ENCODE measurements at regions of chr4 and their contacts with region 1.

Region 1: GRCh38 chr4:81471588-81472288 is at the start of gene RASGEF1B:
- DNase-seq: peak; percentile 98
- ATAC-seq: peak; percentile 79
- H3K4me3 ChIP-seq: peak within 1 kb of the TSS; percentile 85 to 99 (median 98)
- H3K4me3 Mint-ChIP-seq: peak within 1 kb of the TSS; percentile 98
- H3K27ac ChIP-seq: peak within 1 kb of the TSS; percentile 98 to 100
- H3K27ac Mint-ChIP-seq: peak within 1 kb of the TSS; percentile 97
- H3K4me1 ChIP-seq: peaks cover 38 to 46% of the 10 kb centered on the region in 2 donors
- H3K4me1 Mint-ChIP-seq: peaks cover 49% of the 10 kb centered on the region
- H3K27me3 ChIP-seq: no peaks in the 10 kb centered on the region
- H3K27me3 Mint-ChIP-seq: no peaks in the 10 kb centered on the region
- CTCF ChIP-seq: no peak
- total RNA-seq, gene RASGEF1B: 130 and 141 TPM in 2 replicates

Region 2: DNA sequence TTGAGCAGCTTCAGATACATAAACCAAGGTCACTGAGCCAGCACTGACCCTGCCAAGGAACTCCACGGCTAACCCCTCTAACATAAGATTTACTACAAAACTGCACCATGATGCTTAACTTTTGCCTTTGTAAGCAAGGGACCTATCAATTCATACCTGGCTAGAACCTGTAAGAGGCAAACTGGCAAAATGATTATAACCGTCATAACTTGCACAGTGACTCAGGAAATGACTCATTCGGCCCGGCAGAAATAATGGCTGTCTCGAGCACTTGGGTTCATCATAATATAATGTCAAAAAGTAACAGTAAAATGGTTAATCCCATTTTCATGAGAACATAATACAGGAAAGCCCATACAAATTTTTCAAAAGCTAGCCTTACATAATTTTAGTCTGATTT is 17.2 kb before region 1 on chr4:
- CTCF ChIA-PET with region 1: interaction called, 19 read pairs
- POLR2A ChIA-PET with region 1: interaction called, 3 read pairs
- intact Hi-C with region 1: no loop called
- DNase-seq: no peak
- ATAC-seq: no peak
- H3K4me3 ChIP-seq: no peak overlapping the region
- H3K4me3 Mint-ChIP-seq: peak overlapping the region; percentile 40
- H3K27ac ChIP-seq: no peak overlapping the region
- H3K27ac Mint-ChIP-seq: peak overlapping the region; percentile 47
- H3K4me1 ChIP-seq: peaks cover 7 to 21% of the 10 kb centered on the region in 2 donors
- H3K4me1 Mint-ChIP-seq: peaks cover 55% of the 10 kb centered on the region
- H3K27me3 ChIP-seq: no peaks in the 10 kb centered on the region
- H3K27me3 Mint-ChIP-seq: no peaks in the 10 kb centered on the region
- CTCF ChIP-seq: no peak

Region 3: GRCh38 chr4:81606801-81607501 is 135.2 kb after region 1 on chr4:
- CTCF ChIA-PET with region 1: interaction called, 7 read pairs
- POLR2A ChIA-PET with region 1: no interaction called
- intact Hi-C with region 1: loop called (anchors 1 kb)
- DNase-seq: peak; percentile 79
- ATAC-seq: peak; percentile 51
- H3K4me3 ChIP-seq: peak overlapping the region in 4 of 5 experiments; percentile 21 to 40 (median 34)
- H3K4me3 Mint-ChIP-seq: peak overlapping the region; percentile 69
- H3K27ac ChIP-seq: peak overlapping the region; percentile 73 to 89
- H3K27ac Mint-ChIP-seq: peak overlapping the region; percentile 84
- H3K4me1 ChIP-seq: peaks cover 61 to 67% of the 10 kb centered on the region in 2 donors
- H3K4me1 Mint-ChIP-seq: peaks cover 58% of the 10 kb centered on the region
- H3K27me3 ChIP-seq: no peaks in the 10 kb centered on the region
- H3K27me3 Mint-ChIP-seq: no peaks in the 10 kb centered on the region
- CTCF ChIP-seq: peak; percentile 47

Region 4: GRCh38 chr4:81756973-81757372 is 285.2 kb after region 1 on chr4:
- CTCF ChIA-PET with region 1: interaction called, 9 read pairs
- POLR2A ChIA-PET with region 1: interaction called, 3 read pairs
- intact Hi-C with region 1: loop called (anchors 5 kb)
- DNase-seq: peak; percentile 23
- ATAC-seq: peak; percentile 64
- H3K4me3 ChIP-seq: no peak overlapping the region
- H3K4me3 Mint-ChIP-seq: peak overlapping the region; percentile 27
- H3K27ac ChIP-seq: peak overlapping the region in 1 of 2 donors; percentile 68
- H3K27ac Mint-ChIP-seq: peak overlapping the region; percentile 16
- H3K4me1 ChIP-seq: peaks cover 42 to 49% of the 10 kb centered on the region in 2 donors
- H3K4me1 Mint-ChIP-seq: peaks cover 54% of the 10 kb centered on the region
- H3K27me3 ChIP-seq: no peaks in the 10 kb centered on the region
- H3K27me3 Mint-ChIP-seq: no peaks in the 10 kb centered on the region
- CTCF ChIP-seq: no peak

Region 5: GRCh38 chr4:81913427-81913879 is 441.7 kb after region 1 on chr4:
- CTCF ChIA-PET with region 1: interaction called, 5 read pairs
- POLR2A ChIA-PET with region 1: no interaction called
- intact Hi-C with region 1: loop called (anchors 1 kb)
- DNase-seq: peak; percentile 71
- ATAC-seq: peak; percentile 69
- H3K4me3 ChIP-seq: no peak overlapping the region
- H3K4me3 Mint-ChIP-seq: no peak overlapping the region
- H3K27ac ChIP-seq: no peak overlapping the region
- H3K27ac Mint-ChIP-seq: no peak overlapping the region
- H3K4me1 ChIP-seq: peaks cover 0 to 5% of the 10 kb centered on the region in 2 donors
- H3K4me1 Mint-ChIP-seq: peaks cover 4% of the 10 kb centered on the region
- H3K27me3 ChIP-seq: peaks cover 0 to 8% (median 2%) of the 10 kb centered on the region in 4 experiments
- H3K27me3 Mint-ChIP-seq: peaks cover 22% of the 10 kb centered on the region
- CTCF ChIP-seq: peak; percentile 82

Region 6: DNA sequence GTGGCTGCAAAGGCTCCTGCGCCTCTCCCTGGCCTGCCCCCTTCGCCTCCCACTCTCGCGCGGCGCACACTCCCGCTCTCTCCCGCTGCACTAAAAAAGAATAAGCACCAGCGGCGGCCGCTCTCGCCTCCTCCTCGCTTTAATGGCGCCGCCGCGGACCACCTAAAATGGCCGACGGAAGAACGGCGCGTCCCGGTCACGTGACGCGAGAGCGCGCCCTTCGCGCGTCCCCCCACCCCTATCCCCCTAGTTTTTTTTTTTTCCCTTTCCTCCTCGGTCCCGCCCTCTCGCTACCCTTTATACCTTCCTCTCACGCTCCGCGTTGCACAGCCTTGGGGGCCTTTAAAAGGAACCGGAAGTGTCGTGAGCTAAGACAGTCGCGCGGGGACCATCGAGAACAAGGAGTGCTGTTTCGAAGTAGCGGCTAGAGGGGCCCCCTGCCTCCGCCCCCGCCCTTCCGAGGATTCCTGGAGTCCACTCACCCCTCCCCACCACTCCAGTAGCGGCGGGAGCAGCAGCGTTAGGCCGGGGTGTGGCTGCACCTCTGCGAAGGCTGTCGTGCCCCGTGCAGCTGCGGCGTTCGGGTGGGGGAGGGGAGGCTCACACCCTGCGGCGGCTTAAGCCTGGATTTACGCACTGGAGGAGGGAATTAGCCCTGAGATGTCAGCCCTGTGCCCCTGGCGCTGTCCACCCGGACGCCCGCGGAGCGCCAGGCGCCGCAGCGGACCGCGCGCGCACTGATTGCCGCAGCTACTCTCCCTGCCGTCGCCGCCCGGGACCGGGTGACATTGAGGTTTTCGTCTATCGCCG is 902.3 kb after region 1 on chr4 and contains the start of gene HNRNPD:
- CTCF ChIA-PET with region 1: no interaction called
- POLR2A ChIA-PET with region 1: interaction called, 3 read pairs
- intact Hi-C with region 1: loop called (anchors 5 kb)
- DNase-seq: peak; percentile 98
- ATAC-seq: peak; percentile 86
- H3K4me3 ChIP-seq: peak within 1 kb of the TSS; percentile 89 to 98 (median 95)
- H3K4me3 Mint-ChIP-seq: peak within 1 kb of the TSS; percentile 93
- H3K27ac ChIP-seq: peak within 1 kb of the TSS; percentile 98
- H3K27ac Mint-ChIP-seq: peak within 1 kb of the TSS; percentile 98
- H3K4me1 ChIP-seq: peaks cover 38% of the 10 kb centered on the region in 2 donors
- H3K4me1 Mint-ChIP-seq: peaks cover 51% of the 10 kb centered on the region
- H3K27me3 ChIP-seq: no peaks in the 10 kb centered on the region
- H3K27me3 Mint-ChIP-seq: no peaks in the 10 kb centered on the region
- CTCF ChIP-seq: no peak
- total RNA-seq, gene HNRNPD: 266 and 280 TPM in 2 replicates